Endothelial cell of umbilical vein (primary cell): ENCODE measurements at regions of chr7 and their contacts with region 1.

Region 1: DNA sequence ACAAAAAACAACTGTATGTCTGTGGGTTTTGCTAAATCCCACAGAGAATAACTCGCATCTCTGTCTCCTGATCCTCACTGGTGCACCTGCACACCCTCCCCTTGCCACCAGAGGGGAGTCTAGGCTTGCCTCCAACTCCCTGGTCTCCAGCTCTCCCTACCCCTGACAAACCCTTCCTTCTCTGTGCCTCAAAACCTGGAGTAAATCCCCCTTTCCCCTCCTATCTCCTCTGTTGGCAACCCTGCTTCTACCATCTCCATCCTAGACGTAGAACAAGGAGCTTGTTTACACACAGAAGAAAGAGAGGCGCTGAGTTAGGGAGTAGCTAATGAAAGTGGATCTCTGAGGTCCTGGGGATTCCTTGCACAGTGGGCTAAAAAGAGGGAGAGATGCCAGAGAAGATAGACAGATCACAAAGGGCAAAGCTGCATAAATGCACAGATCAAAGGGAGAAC is 6.0 kb downstream of the MBLAC1 start:
- DNase-seq: peak; percentile 55
- H3K4me3 ChIP-seq: no peak overlapping the region
- H3K27ac ChIP-seq: no peak overlapping the region
- H3K4me1 ChIP-seq: peaks cover 5% of the 10 kb centered on the region
- H3K27me3 ChIP-seq: no peaks in the 10 kb centered on the region
- CTCF ChIP-seq: peak; percentile 79 to 92
- POLR2A ChIP-seq: no peak

Region 2: DNA sequence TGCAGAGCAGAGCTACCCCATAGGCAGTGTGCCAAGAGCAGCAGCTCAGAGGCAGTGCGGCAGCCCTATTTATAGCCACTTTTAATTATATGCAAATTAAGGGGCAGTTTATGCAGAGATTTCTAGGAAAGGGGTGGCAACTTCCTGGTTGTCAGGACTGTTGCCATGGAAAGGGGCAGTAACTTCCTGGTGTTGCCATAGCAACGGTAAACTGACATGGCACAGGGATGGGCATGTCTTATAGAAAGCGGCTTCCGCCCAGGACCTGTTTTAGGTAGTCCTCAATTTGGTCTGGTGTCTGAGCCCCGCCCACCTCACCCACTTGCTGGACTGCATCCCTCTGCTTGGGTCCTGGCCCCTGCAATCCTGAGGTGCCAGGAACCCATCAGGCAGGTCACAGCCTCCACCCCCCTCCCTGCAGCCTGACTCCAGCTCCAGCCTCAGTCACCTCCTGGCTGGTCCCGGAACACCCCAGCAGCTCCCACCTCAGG is 1378.7 kb before region 1 on chr7:
- CTCF ChIA-PET with region 1: no interaction called
- POLR2A ChIA-PET with region 1: no interaction called
- dilution Hi-C with region 1: no loop called
- intact Hi-C with region 1: no loop called
- DNase-seq: no peak
- H3K4me3 ChIP-seq: no peak overlapping the region
- H3K27ac ChIP-seq: no peak overlapping the region
- H3K4me1 ChIP-seq: no peaks in the 10 kb centered on the region
- H3K27me3 ChIP-seq: no peaks in the 10 kb centered on the region
- CTCF ChIP-seq: no peak
- POLR2A ChIP-seq: no peak

Region 3: DNA sequence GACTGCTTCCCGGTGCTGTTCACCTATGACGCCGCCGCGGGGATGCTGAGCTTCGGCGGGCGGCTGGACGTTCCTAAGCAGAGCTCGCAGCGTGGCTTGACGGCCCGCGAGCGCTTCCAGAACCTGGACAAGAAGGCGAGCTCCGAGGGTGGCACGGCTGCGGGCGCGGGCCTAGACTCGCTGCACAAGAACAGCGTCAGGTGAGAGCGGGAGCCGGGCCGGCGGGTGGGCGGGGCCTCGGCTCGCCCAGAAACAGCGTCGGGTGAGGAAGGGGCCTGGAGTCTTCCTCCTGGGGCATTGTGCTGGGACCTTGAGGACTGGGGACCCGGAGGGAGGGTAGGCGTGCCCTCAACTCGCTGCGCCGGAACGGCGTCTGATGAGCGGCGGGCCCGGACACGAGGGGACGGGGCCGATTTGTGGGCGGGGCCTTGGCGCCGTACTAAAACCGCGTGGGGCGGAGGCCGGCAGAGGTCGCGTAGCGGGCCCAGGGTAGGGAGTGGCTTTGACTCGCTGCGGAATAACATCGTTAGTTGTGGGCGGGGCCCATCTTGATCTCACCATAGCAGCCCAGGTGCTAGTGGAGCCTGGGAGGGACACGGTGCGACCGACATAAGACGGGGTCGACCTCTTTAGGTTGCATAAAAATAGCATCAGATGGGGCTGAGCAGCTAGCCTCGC is 739.9 kb before region 1 on chr7:
- CTCF ChIA-PET with region 1: no interaction called
- POLR2A ChIA-PET with region 1: no interaction called
- dilution Hi-C with region 1: no loop called
- intact Hi-C with region 1: no loop called
- DNase-seq: peak; percentile 50
- H3K4me3 ChIP-seq: peak overlapping the region in 1 of 3 experiments; percentile 40
- H3K27ac ChIP-seq: peak overlapping the region; percentile 31
- H3K4me1 ChIP-seq: peaks cover 16% of the 10 kb centered on the region
- H3K27me3 ChIP-seq: no peaks in the 10 kb centered on the region
- CTCF ChIP-seq: no peak
- POLR2A ChIP-seq: peak; percentile 35

Region 4: GRCh38 chr7:99752390-99752789 is 380.3 kb before region 1 on chr7:
- CTCF ChIA-PET with region 1: no interaction called
- POLR2A ChIA-PET with region 1: no interaction called
- dilution Hi-C with region 1: no loop called
- intact Hi-C with region 1: no loop called
- DNase-seq: no peak
- H3K4me3 ChIP-seq: no peak overlapping the region
- H3K27ac ChIP-seq: no peak overlapping the region
- H3K4me1 ChIP-seq: no peaks in the 10 kb centered on the region
- H3K27me3 ChIP-seq: peaks cover 4 to 9% of the 10 kb centered on the region in 2 experiments
- CTCF ChIP-seq: no peak
- POLR2A ChIP-seq: no peak

Region 5: GRCh38 chr7:99997545-99998137 is 135.1 kb before region 1 on chr7:
- CTCF ChIA-PET with region 1: interaction called, 14 read pairs
- POLR2A ChIA-PET with region 1: no interaction called
- dilution Hi-C with region 1: no loop called
- intact Hi-C with region 1: loop called (anchors 5 kb)
- DNase-seq: peak; percentile 55
- H3K4me3 ChIP-seq: peak overlapping the region; percentile 6 to 53 (median 47)
- H3K27ac ChIP-seq: no peak overlapping the region
- H3K4me1 ChIP-seq: no peaks in the 10 kb centered on the region
- H3K27me3 ChIP-seq: no peaks in the 10 kb centered on the region
- CTCF ChIP-seq: peak in 1 of 2 donors; percentile 32
- POLR2A ChIP-seq: peak; percentile 79

Region 6: DNA sequence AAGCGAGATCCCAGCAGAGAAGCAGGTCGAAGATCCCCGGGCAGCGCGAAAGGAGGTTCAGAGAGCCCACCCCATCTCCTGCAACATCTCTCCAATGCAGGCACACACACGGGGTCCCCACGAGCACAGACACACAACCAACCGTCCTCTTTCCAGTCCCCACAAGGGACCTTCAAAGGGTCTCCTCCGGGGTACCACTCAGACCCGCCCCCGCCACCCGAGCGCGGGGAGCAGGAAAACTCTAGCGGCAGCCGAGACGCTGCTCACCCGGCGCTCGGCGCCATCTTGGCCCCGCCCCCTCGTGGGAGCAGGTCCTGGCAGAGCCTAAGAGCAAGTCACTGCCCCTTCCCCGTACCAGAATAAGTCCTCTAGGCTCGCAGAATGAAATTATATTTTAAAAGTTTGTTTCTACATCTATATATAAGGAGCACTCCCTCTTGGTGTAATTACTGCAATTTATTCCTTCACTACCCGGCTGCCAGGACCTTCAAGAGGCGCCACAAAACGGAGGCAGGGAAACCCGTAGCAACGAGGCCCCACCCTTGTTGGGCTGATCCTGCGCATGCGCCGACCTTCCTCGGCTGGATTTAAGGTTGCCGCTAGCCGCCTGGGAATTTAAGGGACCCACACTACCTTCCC is 13.5 kb before region 1 on chr7 and contains the starts of genes CNPY4 and TAF6:
- CTCF ChIA-PET with region 1: interaction called, 4 read pairs
- POLR2A ChIA-PET with region 1: no interaction called
- dilution Hi-C with region 1: no loop called
- intact Hi-C with region 1: loop called (anchors 1 kb)
- DNase-seq: peak; percentile 96
- H3K4me3 ChIP-seq: peak within 1 kb of the TSS; percentile 70 to 89 (median 77)
- H3K27ac ChIP-seq: peak within 1 kb of the TSS; percentile 83
- H3K4me1 ChIP-seq: peaks cover 11% of the 10 kb centered on the region
- H3K27me3 ChIP-seq: no peaks in the 10 kb centered on the region
- CTCF ChIP-seq: no peak
- POLR2A ChIP-seq: peak; percentile 86
- total RNA-seq, gene CNPY4: 18.0 and 33.7 TPM in 2 replicates
- total RNA-seq, gene TAF6: 64.6 and 67.3 TPM in 2 replicates

Region 7: DNA sequence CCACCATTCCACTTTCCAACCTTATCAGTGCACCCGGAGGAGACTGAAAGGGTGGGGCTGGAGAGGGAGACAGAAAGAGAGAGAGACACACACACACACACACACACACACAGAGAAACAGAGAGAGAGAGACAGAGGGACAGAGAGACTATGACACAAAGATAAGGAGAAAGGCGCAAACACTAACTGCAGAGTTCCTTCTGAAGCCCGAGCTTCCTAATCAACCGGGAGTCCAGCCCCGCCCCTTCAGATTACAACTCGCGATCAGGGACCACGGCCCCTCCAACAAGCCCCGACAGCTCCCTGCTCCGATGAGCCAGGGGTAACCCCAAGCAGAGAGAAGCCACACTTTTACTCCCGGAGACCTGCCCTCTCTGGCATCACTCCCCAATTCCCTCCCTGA is 35.2 kb after region 1 on chr7:
- CTCF ChIA-PET with region 1: interaction called, 10 read pairs
- POLR2A ChIA-PET with region 1: no interaction called
- dilution Hi-C with region 1: no loop called
- intact Hi-C with region 1: no loop called
- DNase-seq: no peak
- H3K4me3 ChIP-seq: peak overlapping the region; percentile 34 to 67 (median 55)
- H3K27ac ChIP-seq: no peak overlapping the region
- H3K4me1 ChIP-seq: peaks cover 14% of the 10 kb centered on the region
- H3K27me3 ChIP-seq: peaks cover 5 to 15% of the 10 kb centered on the region in 2 experiments
- CTCF ChIP-seq: no peak
- POLR2A ChIP-seq: peak; percentile 28

Region 8: GRCh38 chr7:100208911-100209408 is 76.2 kb after region 1 on chr7:
- CTCF ChIA-PET with region 1: interaction called, 14 read pairs
- POLR2A ChIA-PET with region 1: no interaction called
- dilution Hi-C with region 1: no loop called
- intact Hi-C with region 1: no loop called
- DNase-seq: no peak
- H3K4me3 ChIP-seq: no peak overlapping the region
- H3K27ac ChIP-seq: no peak overlapping the region
- H3K4me1 ChIP-seq: no peaks in the 10 kb centered on the region
- H3K27me3 ChIP-seq: peaks cover 14 to 25% of the 10 kb centered on the region in 2 experiments
- CTCF ChIP-seq: no peak
- POLR2A ChIP-seq: no peak

Region 9: GRCh38 chr7:100407285-100408180 is 274.8 kb after region 1 on chr7:
- CTCF ChIA-PET with region 1: interaction called, 22 read pairs
- POLR2A ChIA-PET with region 1: no interaction called
- dilution Hi-C with region 1: no loop called
- intact Hi-C with region 1: no loop called
- DNase-seq: peak; percentile 72
- H3K4me3 ChIP-seq: no peak overlapping the region
- H3K27ac ChIP-seq: no peak overlapping the region
- H3K4me1 ChIP-seq: no peaks in the 10 kb centered on the region
- H3K27me3 ChIP-seq: peaks cover 23 to 38% of the 10 kb centered on the region in 2 experiments
- CTCF ChIP-seq: peak; percentile 52 to 66
- POLR2A ChIP-seq: no peak